ENCODE measurements at regions of chr7 and their contacts with region 1.

Region 1: DNA sequence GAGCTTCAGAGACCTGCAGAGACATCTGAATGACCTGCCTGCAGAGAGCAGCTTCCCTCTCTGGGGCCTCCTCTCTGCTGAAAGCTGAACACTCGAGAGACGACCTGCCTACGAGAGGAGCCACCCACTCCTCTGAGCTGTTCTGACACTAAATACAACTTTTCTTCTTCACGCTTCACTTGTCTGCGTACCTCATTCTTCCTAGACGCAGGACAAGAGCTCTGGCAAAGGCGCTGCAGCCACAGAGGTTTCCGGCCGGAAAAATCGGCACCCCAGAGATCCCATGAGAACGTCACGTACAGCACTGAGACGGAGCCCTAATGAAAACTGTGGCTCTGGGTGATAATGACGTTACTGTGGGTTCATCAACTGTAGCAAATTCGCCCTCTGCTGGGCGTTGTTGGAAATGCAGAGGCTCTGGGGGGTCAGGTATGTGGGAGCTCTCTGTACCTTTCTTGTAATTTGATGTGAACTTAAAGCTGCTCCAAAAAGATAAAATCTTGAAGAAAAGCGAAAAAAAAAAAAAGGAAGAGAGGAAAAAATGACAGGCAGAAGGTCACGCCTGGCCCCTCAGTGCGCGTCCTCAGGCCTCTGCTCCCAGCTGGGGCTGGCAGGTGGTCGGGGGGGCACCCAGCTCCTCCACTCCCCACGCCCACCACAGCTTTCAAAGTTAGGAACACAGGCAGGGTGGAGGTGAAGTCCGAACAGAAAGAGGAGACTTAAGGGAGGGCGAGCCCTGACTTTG is 120.7 kb downstream of the DYNC2I1 start:
- DNase-seq: peak; percentile 89 to 94
- ATAC-seq: peak; percentile 80 to 92 (median 91)
- H3K4me3 ChIP-seq: peak overlapping the region; percentile 52
- H3K4me3 Mint-ChIP-seq: peak overlapping the region; percentile 91
- H3K27ac ChIP-seq: peak overlapping the region; percentile 80
- H3K27ac Mint-ChIP-seq: peak overlapping the region; percentile 85 to 91
- H3K4me1 ChIP-seq: peaks cover 20% of the 10 kb centered on the region
- H3K4me1 Mint-ChIP-seq: peaks cover 11 to 16% of the 10 kb centered on the region in 2 donors
- H3K27me3 ChIP-seq: no peaks in the 10 kb centered on the region
- H3K27me3 Mint-ChIP-seq: no peaks in the 10 kb centered on the region
- CTCF ChIP-seq: peak; percentile 95

Region 2: GRCh38 chr7:158495786-158496185 is 481.2 kb before region 1 on chr7:
- intact Hi-C with region 1: loop called (anchors 2 kb)
- DNase-seq: no peak
- ATAC-seq: no peak
- H3K4me3 ChIP-seq: no peak overlapping the region
- H3K4me3 Mint-ChIP-seq: no peak overlapping the region
- H3K27ac ChIP-seq: no peak overlapping the region
- H3K27ac Mint-ChIP-seq: no peak overlapping the region
- H3K4me1 ChIP-seq: no peaks in the 10 kb centered on the region
- H3K4me1 Mint-ChIP-seq: no peaks in the 10 kb centered on the region
- H3K27me3 ChIP-seq: no peaks in the 10 kb centered on the region
- H3K27me3 Mint-ChIP-seq: peaks cover 0 to 3% of the 10 kb centered on the region in 2 donors
- CTCF ChIP-seq: no peak

Region 3: DNA sequence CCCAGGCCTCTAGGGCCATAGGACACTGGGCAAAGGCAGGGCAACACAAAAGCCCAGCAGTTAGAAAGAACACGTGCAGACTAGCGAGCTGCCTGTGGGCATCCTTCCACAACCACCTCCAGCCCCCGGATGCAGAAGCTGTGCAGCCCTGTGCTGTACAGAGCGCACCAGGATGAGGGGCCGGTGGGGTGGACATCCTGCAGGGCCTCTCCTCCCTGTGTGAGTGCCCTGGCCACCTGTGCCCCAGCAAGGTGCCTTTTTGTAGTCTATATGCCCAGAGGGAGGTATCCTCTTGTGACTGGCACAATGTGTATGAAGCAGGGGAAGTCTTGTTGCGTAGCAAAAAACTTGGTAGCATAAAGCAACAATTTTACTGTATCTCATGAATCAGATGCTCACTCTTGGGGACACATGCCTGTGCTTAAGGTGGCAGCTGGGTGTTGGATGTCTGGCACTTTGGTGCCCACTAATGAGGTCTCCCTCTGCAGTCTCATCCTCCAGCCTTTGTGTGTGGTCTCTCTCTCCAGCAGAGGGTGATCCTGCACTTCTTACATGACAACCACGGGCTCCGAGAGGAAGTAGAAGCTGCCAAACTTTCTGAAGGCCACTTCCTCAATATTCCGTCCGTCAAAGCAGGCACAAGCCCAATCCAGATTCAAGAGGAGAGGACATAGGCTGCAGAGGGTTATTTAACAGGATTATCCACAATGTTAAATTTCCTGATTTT is 281.1 kb before region 1 on chr7:
- intact Hi-C with region 1: loop called (anchors 1 kb)
- DNase-seq: peak in 1 of 2 donors; percentile 84
- ATAC-seq: peak; percentile 88 to 98 (median 97)
- H3K4me3 ChIP-seq: no peak overlapping the region
- H3K4me3 Mint-ChIP-seq: peak overlapping the region; percentile 70
- H3K27ac ChIP-seq: no peak overlapping the region
- H3K27ac Mint-ChIP-seq: peak overlapping the region; percentile 50 to 73
- H3K4me1 ChIP-seq: peaks cover 11% of the 10 kb centered on the region
- H3K4me1 Mint-ChIP-seq: peaks cover 15 to 17% of the 10 kb centered on the region in 2 donors
- H3K27me3 ChIP-seq: no peaks in the 10 kb centered on the region
- H3K27me3 Mint-ChIP-seq: no peaks in the 10 kb centered on the region
- CTCF ChIP-seq: peak; percentile 48

Region 4: DNA sequence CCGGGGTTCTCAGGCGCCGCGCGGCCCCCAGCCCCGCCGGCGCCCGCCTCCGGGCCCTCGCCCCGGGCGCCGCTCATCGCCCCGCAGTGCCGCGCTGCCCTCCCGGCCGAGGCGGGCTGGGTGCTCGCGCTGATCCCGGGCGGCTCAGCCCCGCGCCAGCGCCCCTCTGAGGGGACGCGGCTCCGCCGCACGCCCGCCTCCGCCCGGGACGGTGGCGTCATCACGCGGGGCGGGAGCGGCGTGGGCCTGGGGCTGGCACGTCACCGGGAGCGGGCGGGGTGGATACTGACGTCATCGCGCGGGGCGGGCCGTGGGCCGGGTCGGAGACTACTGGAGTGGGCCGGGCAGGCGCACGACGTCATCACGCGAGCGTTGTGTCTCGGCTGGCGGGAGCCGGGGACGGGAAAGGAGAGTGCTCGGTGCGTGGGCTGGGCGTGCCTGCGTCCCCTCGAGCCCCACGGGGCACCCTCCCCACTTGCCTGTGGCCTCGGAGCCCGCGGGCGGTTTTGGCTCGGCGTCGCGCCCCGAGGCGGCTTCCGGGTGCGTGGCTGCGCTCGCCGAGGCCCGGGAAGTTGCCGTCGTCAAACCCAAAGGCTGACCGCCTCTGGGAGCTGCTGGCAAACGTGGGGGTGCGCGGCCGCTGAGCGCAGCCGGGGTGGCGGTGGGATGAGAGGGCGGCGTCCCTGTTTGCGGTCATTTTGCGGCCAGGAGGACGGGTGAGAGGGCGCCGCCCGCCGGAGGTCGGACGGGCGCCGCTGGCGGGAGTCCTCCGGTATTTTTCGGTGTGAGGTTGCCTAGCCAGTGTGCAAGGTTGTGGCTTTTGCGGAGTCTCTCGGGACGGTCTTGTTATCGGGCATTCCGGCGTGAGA is 147.4 kb before region 1 on chr7 and contains the start of gene ESYT2:
- intact Hi-C with region 1: loop called (anchors 2 kb)
- DNase-seq: peak; percentile 99 to 100
- ATAC-seq: peak; percentile 78 to 89 (median 80)
- H3K4me3 ChIP-seq: peak within 1 kb of the TSS; percentile 67
- H3K4me3 Mint-ChIP-seq: peak within 1 kb of the TSS; percentile 97
- H3K27ac ChIP-seq: peak within 1 kb of the TSS; percentile 97
- H3K27ac Mint-ChIP-seq: peak within 1 kb of the TSS; percentile 82 to 92
- H3K4me1 ChIP-seq: peaks cover 38% of the 10 kb centered on the region
- H3K4me1 Mint-ChIP-seq: peaks cover 37 to 41% of the 10 kb centered on the region in 2 donors
- H3K27me3 ChIP-seq: no peaks in the 10 kb centered on the region
- H3K27me3 Mint-ChIP-seq: no peaks in the 10 kb centered on the region
- CTCF ChIP-seq: no peak
- total RNA-seq, gene ESYT2: 137 to 163 (median 160) TPM

Region 5: DNA sequence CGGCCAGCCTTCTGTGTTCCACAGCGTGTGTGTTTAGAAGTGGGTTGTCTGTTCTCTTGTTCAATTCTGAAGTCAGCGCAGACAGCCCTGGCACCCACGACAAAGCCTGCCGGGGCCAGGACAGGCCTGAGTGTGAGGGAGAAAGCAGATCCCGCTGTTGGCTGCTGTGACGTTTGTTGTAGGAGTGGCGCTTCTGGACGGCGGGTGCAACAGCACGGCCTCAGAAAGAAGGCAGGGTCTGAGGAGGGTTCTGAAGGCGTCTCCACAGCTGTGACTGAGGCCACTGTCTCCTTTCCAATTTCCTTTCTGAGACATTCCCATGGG is 91.4 kb after region 1 on chr7:
- intact Hi-C with region 1: no loop called
- DNase-seq: peak in 1 of 2 donors; percentile 15
- ATAC-seq: peak; percentile 38 to 61 (median 58)
- H3K4me3 ChIP-seq: no peak overlapping the region
- H3K4me3 Mint-ChIP-seq: peak overlapping the region; percentile 37
- H3K27ac ChIP-seq: peak overlapping the region; percentile 36
- H3K27ac Mint-ChIP-seq: peak overlapping the region in 1 of 2 donors; percentile 85
- H3K4me1 ChIP-seq: peaks cover 19% of the 10 kb centered on the region
- H3K4me1 Mint-ChIP-seq: peaks cover 19 to 42% of the 10 kb centered on the region in 2 donors
- H3K27me3 ChIP-seq: no peaks in the 10 kb centered on the region
- H3K27me3 Mint-ChIP-seq: no peaks in the 10 kb centered on the region
- CTCF ChIP-seq: no peak

Measured in natural killer cell (primary cell).